ENCODE measurements at regions of chr1 and their contacts with region 1.

Region 1: DNA sequence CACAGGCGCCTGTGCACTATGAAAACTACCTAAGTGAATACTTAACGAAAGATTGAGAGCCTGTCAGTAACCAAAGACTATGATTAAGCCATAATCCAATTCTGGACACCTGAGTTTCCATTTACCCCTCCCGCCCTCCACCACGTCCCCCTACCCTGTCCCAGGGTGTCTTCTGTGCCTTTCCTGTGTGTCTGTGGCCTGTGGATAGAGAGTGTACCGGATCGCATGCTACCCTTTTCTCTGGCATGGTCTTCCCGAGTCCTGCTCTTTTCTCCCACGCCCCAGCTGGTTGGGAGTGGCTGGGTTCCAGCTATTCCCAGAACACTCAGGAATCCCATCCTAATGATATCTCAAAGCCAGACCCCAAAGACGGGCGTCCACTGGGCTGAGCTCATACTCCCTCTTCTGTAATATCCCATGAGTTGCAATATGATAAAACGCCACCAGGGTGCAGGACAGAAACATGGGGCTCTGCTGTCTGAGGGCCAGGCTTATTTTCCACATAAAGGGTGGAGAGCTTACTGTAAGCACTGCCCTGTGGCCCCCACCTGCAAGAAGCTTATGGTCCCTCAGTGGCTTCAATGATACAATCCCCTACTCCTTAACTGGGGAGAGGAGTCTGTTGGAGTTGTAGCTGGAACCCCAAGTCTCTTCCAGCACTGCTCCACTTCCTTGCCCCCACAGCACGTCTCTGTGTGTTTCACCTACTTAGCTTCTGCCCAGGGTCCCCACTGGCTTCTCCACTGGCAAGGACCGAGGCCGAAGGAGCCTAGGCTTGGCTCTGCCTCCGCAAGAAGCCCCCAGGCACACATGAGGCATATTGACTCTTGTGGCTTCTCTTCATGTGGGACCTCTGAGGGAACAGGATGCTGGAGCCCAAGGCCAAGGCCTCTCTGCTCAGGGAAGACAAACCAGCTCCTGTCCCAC is 17.6 kb upstream of the ALX3 start:
- DNase-seq: peak; percentile 84
- H3K4me3 ChIP-seq: no peak overlapping the region; a peak in 1 of 4 replicates
- H3K27ac ChIP-seq: peak overlapping the region in 1 of 2 experiments; percentile 64; a peak in 1 of 4 replicates
- H3K4me1 ChIP-seq: peaks cover 0 to 55% of the 10 kb centered on the region in 2 experiments; a peak in 2 of 4 replicates
- H3K27me3 ChIP-seq: no peaks in the 10 kb centered on the region
- CTCF ChIP-seq: peak; percentile 66
- EP300 ChIP-seq: no peak
- RAD21 ChIP-seq: peak; percentile 72

Region 2: DNA sequence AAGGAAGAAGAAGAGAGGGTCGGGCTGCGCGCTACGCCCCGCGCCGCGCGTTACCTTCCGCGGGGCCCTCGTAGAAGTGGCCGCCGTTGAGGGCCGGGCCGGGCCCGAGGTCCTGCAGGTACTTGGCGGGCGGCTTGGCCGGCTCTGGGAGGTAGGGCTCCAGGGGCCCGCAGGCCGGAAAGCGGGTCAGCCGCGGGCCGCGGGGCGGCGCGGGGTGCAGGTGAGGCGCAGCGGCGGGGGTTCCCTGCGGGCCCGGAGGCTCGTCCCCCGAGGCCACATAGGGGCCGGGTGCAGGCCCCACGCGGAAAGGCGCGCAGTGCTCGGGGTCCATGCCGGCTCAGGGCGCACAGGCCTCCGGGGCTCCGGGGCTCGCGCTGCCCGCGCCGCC is 17.8 kb before region 1 on chr1:
- CTCF ChIA-PET with region 1: interaction called, 1,768 read pairs
- POLR2A ChIA-PET with region 1: no interaction called
- DNase-seq: no peak
- H3K4me3 ChIP-seq: no peak overlapping the region
- H3K27ac ChIP-seq: no peak overlapping the region
- H3K4me1 ChIP-seq: peaks cover 0 to 12% of the 10 kb centered on the region in 2 experiments; a peak in 2 of 4 replicates
- H3K27me3 ChIP-seq: no peaks in the 10 kb centered on the region; the same call in 1 of the 2 replicates
- CTCF ChIP-seq: no peak
- EP300 ChIP-seq: no peak
- RAD21 ChIP-seq: no peak

Region 3: DNA sequence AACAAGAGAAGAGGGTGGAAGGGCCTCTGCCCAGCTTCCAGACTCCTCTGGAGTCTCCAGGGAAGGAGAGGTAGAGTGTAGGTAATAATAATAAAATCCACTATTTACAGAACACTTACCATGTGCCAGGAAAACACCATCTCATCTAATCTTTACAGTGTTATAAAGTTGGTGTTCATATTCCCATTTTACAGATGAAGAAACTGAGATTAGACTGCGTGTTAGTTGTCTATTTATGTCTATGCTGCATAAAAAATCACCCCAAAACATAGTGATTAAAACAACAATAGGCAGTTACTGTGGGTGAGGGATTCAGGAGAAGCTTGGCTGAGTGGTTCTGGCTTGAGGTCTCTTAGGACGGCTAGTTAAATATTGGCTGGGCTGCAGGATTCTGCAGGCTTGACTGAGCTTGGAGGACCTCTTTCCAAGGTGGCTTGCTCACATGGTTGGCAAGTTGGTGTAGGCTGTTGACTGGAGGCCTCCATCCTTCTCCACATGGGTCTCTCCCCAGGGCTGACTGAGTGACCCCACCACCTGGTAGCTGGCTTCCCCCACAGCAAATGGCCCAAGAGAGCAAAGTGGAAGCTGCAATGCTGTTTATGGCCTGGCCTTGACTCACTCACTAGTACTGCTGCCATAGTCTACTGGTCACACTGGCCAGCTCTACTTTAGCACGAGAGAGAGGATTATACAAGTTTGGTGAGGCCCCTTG is 11.1 kb before region 1 on chr1:
- CTCF ChIA-PET with region 1: interaction called, 20 read pairs
- POLR2A ChIA-PET with region 1: no interaction called
- DNase-seq: no peak
- H3K4me3 ChIP-seq: no peak overlapping the region
- H3K27ac ChIP-seq: no peak overlapping the region
- H3K4me1 ChIP-seq: peaks cover 0 to 10% of the 10 kb centered on the region in 2 experiments; a peak in 1 of 4 replicates
- H3K27me3 ChIP-seq: no peaks in the 10 kb centered on the region; the same call in 1 of the 2 replicates
- CTCF ChIP-seq: no peak
- EP300 ChIP-seq: no peak
- RAD21 ChIP-seq: no peak

Region 4: DNA sequence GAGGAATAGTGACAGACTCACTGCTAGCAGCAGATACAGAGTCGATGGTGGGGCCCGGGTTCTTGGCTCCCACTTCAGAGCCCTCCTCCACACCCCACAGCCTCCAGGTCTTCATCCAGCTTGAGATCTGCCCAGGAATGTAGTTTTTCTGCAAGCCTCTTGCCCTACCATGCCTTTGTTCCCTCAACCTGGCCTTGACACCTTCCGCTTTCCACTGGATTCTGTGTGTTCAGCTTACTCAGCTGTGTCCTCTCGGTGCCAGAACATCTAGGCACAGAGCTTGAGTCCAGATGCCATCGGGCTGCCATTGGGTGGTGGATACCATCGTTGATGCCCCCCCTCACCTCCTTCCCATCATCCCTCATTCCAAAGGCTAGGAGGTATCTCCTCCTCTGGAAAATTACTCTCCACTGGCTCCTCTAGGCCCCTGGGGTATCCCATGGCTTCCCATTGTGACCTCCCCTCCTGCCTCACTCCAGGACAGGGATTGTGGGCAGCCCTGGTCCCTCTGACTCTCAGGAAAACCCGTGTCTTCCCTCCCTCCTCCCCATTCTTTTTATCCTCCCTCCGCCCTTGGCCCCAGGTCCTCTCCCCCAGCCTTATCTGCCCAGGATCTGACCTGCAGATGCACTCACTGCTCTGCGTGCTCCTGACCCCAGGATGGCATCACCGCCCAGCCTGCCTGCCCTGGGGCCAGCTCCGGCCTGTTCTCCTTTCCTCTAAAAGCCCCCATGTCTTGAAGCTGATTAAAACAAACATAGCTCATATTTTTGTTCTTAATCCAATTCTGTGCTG is 10.0 kb after region 1 on chr1:
- CTCF ChIA-PET with region 1: interaction called, 187 read pairs
- POLR2A ChIA-PET with region 1: interaction called, 3 read pairs
- DNase-seq: peak; percentile 73
- H3K4me3 ChIP-seq: no peak overlapping the region
- H3K27ac ChIP-seq: peak overlapping the region in 1 of 2 experiments; percentile 82; a peak in 2 of 4 replicates
- H3K4me1 ChIP-seq: peaks cover 4 to 82% of the 10 kb centered on the region in 2 experiments; a peak in 3 of 4 replicates
- H3K27me3 ChIP-seq: no peaks in the 10 kb centered on the region
- CTCF ChIP-seq: no peak
- EP300 ChIP-seq: peak in 1 of 2 experiments; percentile 82; a peak in 2 of 4 replicates
- RAD21 ChIP-seq: no peak

Region 5: GRCh38 chr1:110118636-110119615 is 30.9 kb after region 1 on chr1:
- CTCF ChIA-PET with region 1: interaction called, 10 read pairs
- POLR2A ChIA-PET with region 1: interaction called, 3 read pairs
- DNase-seq: no peak
- H3K4me3 ChIP-seq: no peak overlapping the region
- H3K27ac ChIP-seq: no peak overlapping the region
- H3K4me1 ChIP-seq: peaks cover 0 to 6% of the 10 kb centered on the region in 2 experiments; a peak in 1 of 4 replicates
- H3K27me3 ChIP-seq: no peaks in the 10 kb centered on the region; the same call in 1 of the 2 replicates
- CTCF ChIP-seq: no peak
- EP300 ChIP-seq: no peak
- RAD21 ChIP-seq: no peak

Region 6: GRCh38 chr1:110356405-110356804 is 268.3 kb after region 1 on chr1:
- CTCF ChIA-PET with region 1: no interaction called
- POLR2A ChIA-PET with region 1: no interaction called
- DNase-seq: no peak
- H3K4me3 ChIP-seq: no peak overlapping the region
- H3K27ac ChIP-seq: no peak overlapping the region
- H3K4me1 ChIP-seq: no peaks in the 10 kb centered on the region; a peak in 2 of 4 replicates
- H3K27me3 ChIP-seq: no peaks in the 10 kb centered on the region
- CTCF ChIP-seq: no peak
- EP300 ChIP-seq: no peak
- RAD21 ChIP-seq: no peak